Heart right ventricle (tissue), 16 donors: ENCODE measurements at regions of chr6 and their contacts with region 1.

Region 1: DNA sequence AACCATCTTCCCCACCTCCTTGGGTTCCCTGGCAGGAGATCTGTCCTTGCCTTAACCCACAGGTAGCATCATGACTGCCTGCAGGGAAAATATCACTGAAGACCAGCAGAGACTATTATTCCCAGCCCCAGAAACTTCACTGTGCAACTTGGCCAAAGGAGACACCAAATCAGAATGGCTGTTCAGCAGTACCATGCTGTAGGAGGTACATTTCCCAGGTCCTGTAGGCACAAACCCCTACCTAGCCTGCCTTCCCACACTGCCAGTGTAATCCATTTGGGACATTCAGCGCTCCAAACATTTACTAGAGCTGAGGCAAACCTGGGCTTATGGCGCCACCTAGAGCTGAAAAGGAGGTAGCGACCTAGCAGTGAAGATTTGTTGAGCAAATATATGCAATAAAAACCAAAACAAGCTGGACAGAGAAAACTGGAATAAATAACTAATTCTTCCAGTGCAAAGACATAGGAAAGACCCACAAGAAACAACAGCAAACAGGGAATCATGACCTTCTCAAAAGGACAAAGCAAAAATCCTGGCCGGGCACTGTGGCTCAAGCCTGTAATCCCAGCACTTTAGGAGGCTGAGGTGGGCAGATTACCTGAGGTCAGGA is 60.3 kb downstream of the VTA1 start:
- DNase-seq: peak in 1 of 2 donors; percentile 42
- ATAC-seq: peak; percentile 62 to 83 (median 76)
- H3K4me3 ChIP-seq: no peak overlapping the region
- H3K27ac ChIP-seq: no peak overlapping the region
- H3K4me1 ChIP-seq: peaks cover 0 to 4% (median 0%) of the 10 kb centered on the region in 9 donors
- H3K27me3 ChIP-seq: no peaks in the 10 kb centered on the region
- CTCF ChIP-seq: peak; percentile 57 to 87 (median 74)

Region 2: GRCh38 chr6:141963516-141964285 is 243.7 kb before region 1 on chr6:
- intact Hi-C with region 1: no loop called
- DNase-seq: no peak
- ATAC-seq: no peak
- H3K4me3 ChIP-seq: no peak overlapping the region
- H3K27ac ChIP-seq: no peak overlapping the region
- H3K4me1 ChIP-seq: no peaks in the 10 kb centered on the region
- H3K27me3 ChIP-seq: no peaks in the 10 kb centered on the region
- CTCF ChIP-seq: no peak

Region 3: DNA sequence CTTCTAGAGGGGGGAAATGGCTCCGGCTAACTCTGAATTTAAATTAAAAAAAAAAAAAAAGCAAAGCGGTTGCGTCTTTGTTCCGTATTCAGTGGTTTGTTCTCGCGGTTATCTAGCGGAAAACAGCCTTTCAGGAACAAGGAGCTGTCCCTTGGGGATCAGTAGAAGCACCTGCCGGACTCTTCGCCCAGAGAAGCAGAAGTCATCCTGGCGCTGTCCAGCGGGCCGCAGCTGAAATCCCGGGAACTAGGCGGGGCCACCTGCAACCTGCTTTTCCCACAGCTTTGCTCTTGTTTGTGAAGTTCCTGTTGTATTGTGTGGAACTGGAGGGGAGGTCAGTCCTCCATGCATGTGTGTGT is 118.5 kb before region 1 on chr6:
- intact Hi-C with region 1: no loop called
- DNase-seq: peak in 1 of 2 donors; percentile 5
- ATAC-seq: peak in 1 of 8 donors; percentile 7
- H3K4me3 ChIP-seq: no peak overlapping the region
- H3K27ac ChIP-seq: no peak overlapping the region
- H3K4me1 ChIP-seq: peaks cover 0 to 5% (median 0%) of the 10 kb centered on the region in 9 donors
- H3K27me3 ChIP-seq: peaks cover 0 to 44% (median 38%) of the 10 kb centered on the region in 7 donors
- CTCF ChIP-seq: no peak

Region 4: DNA sequence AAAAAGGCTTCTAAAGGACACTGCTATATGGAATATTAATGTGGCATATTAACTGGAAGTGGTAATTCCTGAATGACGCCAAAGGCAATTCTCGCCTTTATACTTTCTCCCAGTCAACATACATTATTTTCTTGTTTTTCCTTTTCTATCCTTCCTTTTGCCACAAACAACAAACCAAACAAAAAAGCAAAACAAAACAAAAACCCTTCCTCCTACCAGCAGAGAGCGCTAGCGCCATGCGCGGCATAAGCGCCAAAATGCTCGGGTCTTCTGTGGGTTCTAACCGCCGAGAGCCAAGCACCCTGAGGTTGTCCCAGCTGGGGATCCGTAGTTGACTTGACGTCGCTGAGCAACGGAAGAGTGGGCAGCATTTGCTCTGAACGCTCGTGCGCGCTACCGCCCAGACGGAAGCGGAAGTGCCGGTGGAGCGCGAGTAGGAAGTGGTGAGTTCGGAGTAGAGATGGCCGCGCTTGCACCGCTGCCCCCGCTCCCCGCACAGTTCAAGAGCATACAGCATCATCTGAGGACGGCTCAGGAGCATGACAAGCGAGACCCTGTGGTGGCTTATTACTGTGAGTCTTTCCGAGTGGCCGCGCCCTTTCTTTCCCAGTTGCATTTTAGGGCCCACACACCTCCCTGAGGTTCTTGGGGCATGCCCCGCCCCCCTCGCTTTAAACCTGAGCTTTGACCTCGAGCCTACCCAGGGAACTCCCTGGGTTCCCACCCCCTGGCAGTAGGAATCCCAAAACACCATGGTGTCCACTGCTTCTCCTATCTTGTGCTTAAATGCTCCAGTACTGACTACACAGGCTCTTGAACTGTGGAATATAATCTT is 60.3 kb before region 1 on chr6 and contains the starts of genes NMBR and VTA1:
- intact Hi-C with region 1: loop called in 9 of 10 experiments (anchors 1 to 10 kb)
- DNase-seq: peak; percentile 94 to 99
- ATAC-seq: peak; percentile 99 to 100 (median 100)
- H3K4me3 ChIP-seq: peak within 1 kb of the TSS; percentile 55 to 93 (median 80)
- H3K27ac ChIP-seq: peak within 1 kb of the TSS in 9 of 10 donors; percentile 54 to 77 (median 70)
- H3K4me1 ChIP-seq: peaks cover 0 to 31% (median 22%) of the 10 kb centered on the region in 9 donors
- H3K27me3 ChIP-seq: no peaks in the 10 kb centered on the region
- CTCF ChIP-seq: peak; percentile 85 to 98 (median 90)
- total RNA-seq, gene NMBR: not detected
- total RNA-seq, gene VTA1: 33.3 to 42.6 (median 37.8) TPM

Region 5: GRCh38 chr6:142155895-142156757 is 51.2 kb before region 1 on chr6:
- intact Hi-C with region 1: loop called in 3 of 10 experiments (anchors 2 to 10 kb)
- DNase-seq: no peak
- ATAC-seq: peak in 2 of 8 donors; percentile 28 to 56
- H3K4me3 ChIP-seq: no peak overlapping the region
- H3K27ac ChIP-seq: no peak overlapping the region
- H3K4me1 ChIP-seq: peaks cover 0 to 31% (median 0%) of the 10 kb centered on the region in 9 donors
- H3K27me3 ChIP-seq: no peaks in the 10 kb centered on the region
- CTCF ChIP-seq: peak in 8 of 9 donors; percentile 25 to 63 (median 48)